ENCODE measurements at regions of chr5 and their contacts with region 1.

Region 1: DNA sequence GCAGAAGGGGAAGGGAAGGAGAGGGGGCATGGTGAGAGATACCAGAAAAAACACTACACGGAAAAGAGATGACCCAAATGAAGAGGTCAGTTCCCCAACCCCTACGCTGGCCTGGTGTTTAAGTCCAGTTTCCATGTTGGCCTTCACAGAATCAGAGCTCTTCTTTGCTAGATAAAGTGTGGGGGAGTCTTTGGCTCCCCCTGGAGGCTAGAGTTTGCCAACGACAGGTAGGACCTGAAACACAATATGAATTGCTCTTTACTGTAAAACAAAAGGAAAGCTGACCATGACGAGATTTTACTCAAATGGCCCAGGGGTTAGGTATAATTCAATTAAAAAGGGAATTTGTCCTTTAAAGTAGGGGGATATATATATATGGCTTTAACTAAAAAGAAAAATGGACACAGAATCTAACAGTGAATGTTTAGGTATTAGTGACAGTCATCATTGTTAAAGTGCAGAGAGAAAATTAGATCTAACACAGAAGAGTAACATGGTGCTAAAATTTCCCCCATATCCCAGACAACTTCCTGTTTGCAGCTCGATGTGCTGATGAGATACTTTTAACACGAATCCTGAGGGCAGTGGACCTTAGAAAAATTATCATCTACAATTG is 92.0 kb downstream of the SV2C start:
- DNase-seq: peak; percentile 71
- H3K4me3 ChIP-seq: no peak overlapping the region
- H3K27ac ChIP-seq: no peak overlapping the region
- H3K4me1 ChIP-seq: no peaks in the 10 kb centered on the region
- H3K27me3 ChIP-seq: no peaks in the 10 kb centered on the region
- CTCF ChIP-seq: peak; percentile 69

Region 2: DNA sequence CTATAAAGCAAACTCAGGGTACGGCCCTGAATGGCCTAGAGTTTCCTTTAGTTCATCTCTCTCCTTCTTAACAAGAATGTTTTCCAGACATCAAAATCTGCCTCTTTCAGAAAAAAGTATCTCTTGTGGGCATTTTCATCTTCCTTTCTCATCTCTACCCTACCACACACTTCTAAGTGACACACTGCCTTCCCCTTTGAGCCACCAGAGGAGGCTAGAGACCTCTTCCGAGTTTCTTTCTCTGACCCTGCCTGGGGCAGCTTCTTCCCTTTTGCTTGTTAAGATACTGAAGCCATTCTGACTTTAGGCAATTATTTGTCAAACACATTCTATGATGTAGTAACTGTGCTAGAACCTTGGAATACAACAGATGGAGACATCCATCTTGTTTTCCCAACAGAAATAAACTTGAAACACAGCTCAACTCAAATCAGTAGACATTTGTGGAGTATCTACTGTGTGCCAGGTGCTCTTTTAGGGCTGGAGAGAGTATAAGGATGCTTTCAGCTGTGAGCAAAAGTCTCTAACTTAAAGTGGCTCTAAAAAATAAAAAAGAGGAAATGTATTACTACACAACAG is 100.6 kb before region 1 on chr5:
- intact Hi-C with region 1: loop called (anchors 2 kb)
- DNase-seq: peak; percentile 36
- H3K4me3 ChIP-seq: no peak overlapping the region
- H3K27ac ChIP-seq: no peak overlapping the region
- H3K4me1 ChIP-seq: no peaks in the 10 kb centered on the region
- H3K27me3 ChIP-seq: no peaks in the 10 kb centered on the region
- CTCF ChIP-seq: peak; percentile 80

Region 3: GRCh38 chr5:76273206-76273885 is 98.2 kb after region 1 on chr5:
- intact Hi-C with region 1: no loop called
- DNase-seq: peak; percentile 59
- H3K4me3 ChIP-seq: no peak overlapping the region
- H3K27ac ChIP-seq: peak overlapping the region; percentile 22
- H3K4me1 ChIP-seq: no peaks in the 10 kb centered on the region
- H3K27me3 ChIP-seq: no peaks in the 10 kb centered on the region
- CTCF ChIP-seq: no peak